Cardiac septum (tissue), 1 donor: ENCODE measurements at regions of chr11 and their contacts with region 1.

Region 1: DNA sequence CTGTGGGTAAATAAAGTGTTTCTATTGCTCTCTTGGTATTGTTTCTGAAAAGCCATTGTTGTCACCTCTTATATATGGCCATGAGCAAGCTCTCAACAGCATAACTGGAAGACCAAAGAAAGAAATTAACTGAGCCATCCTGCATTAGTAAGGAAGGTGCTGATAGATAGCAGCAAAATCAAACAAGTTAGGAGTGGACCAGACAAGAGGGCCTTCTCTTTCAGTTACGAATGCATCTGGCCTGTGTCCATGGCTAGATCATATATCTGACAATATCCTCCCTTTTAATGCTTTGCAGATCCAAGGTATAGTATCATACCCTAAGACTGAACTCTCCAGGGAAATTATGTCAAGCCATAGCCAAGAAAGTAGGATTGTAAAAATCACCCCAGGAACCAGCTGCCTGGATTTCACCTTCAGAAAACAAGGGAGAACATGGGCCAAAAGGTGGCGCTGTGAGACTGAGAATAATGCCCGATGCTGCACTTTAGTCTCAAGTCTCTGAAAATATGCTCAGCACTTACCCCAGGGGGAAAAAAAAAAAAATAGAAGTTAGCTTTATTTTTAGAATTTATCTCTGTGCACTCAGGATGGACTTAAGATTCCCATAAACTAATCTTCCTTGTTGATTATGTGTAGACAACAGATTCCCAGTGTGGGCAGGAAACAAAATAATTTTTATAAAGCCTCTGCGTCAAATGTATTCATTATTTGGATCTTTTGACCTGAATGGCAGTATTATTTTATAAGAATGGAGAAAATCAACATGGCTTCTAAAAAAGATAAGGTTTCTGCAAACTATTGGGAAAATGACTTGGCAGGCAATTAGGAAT is 415.1 kb downstream of the ETS1 start:
- DNase-seq: peak; percentile 83

Region 2: DNA sequence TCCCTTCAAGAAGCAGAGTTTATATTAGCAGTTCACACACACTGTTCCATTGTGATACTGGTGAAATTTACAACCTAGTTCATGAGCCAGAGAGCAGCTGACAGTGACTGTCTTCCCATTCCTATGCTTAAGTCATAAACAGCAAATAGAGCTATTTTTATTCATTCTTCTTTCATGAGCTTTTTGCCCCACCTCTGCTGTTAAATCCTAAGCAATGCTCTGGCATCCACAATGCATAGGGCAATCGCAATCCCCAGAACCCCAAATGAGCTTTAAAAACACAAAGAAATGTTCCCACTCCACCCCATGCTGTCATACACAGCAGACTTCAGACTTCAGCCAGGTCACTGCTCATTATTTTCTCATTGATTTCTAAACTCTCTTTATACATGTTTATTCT is 107.6 kb after region 1 on chr11:
- intact Hi-C with region 1: loop called (anchors 10 kb)
- DNase-seq: no peak

Region 3: DNA sequence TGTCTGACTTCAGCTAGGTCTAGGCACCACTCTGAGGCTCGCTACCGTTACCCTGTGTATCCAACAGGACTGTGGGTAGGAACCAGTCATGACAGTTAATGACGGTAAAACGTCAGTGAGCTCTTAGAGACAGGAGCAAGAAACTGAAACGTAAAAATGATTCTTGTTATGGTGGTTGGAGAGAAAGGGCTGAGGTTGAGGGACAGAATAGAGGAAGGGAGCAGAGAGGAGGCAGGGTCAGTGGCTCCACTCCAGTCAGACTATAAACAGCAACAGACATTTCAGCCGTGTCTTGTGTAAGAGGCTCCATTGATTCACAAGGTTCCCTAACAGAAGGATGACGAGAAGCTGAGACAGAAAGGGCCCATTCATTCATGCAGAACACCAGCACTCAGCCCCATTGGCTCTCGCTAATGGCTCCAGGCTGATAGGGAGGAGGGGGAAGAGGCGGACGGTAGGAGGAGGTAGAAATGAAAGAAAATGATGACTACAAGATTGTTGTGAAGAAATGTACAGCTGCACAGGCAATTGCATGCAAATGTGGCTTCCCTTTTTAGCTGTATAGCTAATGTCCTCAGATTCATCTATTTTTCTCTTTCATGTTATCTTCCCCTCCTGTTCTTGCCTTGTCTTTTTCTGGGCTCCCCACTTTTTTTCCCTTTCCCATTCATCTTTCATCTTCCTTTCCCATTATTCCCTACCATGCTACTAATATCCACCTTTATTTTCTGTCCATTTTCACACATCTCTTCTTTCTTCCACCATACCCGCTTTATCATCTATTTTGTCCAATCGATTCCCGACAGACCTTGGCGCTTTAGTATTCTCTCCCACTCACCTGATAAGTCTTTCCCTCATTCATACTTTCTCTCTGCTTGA is 380.8 kb after region 1 on chr11:
- intact Hi-C with region 1: loop called (anchors 10 kb)
- DNase-seq: no peak

Region 4: DNA sequence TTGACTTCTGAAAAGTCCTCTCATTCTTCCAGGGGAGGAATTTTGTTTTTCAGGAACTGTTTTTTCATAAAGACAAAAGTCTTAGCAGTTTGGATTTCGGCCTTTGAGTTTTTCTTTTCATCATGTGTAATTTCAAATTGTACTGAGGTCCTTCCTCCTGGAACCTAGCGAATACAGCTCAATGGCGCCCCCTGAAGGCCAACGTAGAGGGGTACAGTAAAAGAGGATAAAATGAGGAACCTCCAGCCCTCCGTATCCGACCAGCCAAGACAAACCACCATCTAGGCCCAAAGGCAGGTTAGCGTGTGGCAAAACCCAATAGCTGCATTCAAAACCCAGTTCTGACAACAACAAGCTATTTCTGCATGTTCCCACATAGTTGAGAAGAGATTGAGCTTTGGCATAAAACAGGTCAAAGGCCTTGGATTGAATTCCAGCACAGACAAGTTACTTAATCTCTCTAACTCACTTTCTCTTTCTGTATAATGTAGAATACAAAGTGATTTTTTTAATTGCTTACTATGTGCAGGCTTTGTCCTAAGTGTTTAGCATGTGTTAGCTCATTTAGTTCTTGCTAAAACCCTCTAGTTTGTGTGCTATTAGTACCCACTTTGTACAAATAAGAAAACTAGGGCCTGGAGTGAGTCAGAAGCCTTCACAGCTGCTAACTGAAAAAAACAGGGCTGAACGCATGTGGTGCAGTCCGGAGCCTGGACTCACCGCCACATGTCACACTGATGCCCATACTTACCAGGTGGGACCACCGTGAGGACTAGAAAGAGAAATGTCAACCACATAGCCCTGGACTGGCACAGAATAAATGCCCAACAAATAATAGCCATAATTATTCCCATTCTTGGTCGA is 458.3 kb after region 1 on chr11:
- intact Hi-C with region 1: loop called (anchors 2 kb)
- DNase-seq: peak; percentile 95

Region 5: DNA sequence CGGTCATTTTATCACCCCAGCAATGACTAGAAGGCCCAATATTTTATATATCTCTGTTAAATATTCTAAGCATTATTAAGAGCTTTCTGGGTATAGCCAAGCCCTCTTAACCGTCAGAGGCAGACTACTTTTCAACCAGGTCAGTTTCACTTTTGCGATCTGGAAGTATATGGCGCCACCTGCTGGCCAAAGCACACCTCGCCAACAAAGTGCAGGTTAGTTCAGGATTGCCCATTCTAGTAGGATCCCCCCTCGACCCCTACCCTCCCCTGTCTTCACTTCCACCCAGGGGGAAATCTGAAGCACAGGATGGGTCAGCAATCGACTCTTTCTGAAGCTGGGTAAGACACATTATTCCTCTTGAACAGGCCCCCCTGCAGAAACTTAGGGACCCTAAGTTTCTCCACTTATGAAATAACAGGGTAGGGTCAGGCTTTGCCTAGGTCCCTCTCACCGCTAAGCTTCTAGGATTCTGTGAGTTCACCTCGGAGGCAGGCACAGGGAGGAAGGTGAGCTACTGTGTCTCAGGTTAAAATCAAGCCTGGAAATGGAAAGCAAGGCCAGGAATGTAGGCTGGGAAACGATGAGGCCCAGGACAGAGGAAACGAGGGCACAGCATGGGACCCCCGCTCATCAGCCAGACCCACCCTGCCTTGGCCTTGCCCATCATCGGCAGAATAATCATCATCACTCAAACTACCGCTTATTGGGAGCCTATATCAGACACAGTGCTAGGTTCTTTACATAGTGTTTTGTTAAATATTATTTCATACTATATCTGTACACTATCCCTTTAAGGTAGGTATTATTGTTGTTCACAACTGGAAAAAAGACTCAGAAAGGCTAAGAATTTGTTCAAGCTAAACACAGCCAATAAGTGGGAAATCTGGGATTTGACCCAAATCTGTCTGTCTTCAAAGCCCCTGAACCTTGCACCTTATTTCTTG is 659.2 kb after region 1 on chr11:
- intact Hi-C with region 1: loop called (anchors 5 kb)
- DNase-seq: peak; percentile 89

Region 6: DNA sequence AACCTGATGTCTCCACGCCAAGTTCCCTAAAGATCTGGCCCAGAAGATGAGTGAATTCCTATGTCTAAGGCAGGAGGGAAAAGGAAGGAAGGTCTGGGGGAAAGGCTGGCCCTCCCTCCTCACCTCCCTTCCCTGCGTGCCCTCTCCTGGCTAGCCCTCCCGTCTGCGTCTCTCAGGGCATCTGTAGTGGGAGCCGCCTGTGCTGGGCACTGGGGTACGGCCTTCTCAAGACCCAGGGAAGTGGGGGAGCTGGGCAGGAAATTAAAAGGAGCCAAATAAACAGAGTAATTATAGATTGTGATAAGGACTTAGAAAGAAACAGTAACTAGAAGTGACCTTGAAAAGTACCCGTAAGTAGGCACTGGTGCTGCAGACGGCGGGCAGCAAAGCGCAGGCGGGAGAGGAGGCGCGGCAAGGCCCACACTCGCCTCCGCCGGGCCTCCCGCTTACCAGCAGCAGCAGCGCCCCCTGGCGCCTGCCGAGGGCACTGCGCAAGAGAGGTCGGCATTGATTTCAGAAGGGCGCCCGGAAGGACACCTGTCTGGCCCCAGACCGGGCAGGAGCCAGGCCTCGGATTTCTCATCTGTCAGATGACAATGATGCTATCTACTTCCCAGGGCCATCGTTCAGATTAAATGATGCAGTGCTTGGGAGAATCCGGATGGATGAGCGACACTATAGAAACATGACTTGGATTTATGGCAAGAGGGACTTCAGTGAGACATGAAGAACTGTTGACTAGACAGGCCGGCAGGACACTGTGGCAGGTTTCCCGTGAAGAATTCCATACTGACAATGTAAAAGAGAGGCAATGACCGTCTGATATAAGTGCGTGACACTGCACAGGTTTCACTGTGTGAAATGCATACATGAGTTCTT is 687.5 kb after region 1 on chr11:
- intact Hi-C with region 1: loop called (anchors 5 kb)
- DNase-seq: peak; percentile 87